ENCODE measurements at regions of chr17 and their contacts with region 1.

Region 1: GRCh38 chr17:55513885-55514591 is 2.8 kb upstream of the SMIM36 start:
- DNase-seq: no peak
- H3K4me3 ChIP-seq: no peak overlapping the region
- CTCF ChIP-seq: peak; percentile 63

Region 2: DNA sequence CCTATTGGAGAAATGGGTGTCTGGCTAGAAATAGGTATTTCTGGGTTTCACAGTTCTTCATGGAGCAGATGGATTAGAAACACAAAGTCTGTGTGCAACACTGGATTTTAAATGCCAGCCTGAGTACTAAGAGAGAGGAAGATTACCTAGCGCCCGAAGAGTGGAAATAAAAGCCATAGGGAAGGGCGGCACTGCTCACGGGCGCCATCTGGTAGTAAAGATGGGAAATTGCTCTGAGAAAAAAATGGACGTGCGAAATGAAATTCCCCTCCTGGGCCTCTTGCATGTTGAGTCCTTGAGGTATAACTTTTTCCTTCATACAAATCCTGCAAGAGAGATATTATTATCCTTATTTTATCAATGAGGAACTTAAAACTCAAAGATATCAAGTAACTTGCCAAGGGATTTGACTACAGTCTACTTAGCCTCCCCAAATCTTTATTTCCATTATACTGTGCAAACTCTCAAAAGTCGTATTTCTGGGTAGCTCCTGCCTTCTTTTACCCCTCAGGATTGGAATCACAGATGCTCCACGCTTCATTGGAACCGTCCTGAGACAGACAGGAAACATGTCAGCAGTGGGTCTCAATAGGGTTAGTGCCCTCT is 165.2 kb before region 1 on chr17:
- CTCF ChIA-PET with region 1: interaction called, 40 read pairs
- POLR2A ChIA-PET with region 1: no interaction called
- DNase-seq: no peak
- H3K4me3 ChIP-seq: no peak overlapping the region
- CTCF ChIP-seq: peak; percentile 79

Region 3: GRCh38 chr17:55356434-55357328 is 157.4 kb before region 1 on chr17:
- CTCF ChIA-PET with region 1: interaction called, 40 read pairs
- POLR2A ChIA-PET with region 1: no interaction called
- DNase-seq: no peak
- H3K4me3 ChIP-seq: no peak overlapping the region
- CTCF ChIP-seq: peak; percentile 59

Region 4: DNA sequence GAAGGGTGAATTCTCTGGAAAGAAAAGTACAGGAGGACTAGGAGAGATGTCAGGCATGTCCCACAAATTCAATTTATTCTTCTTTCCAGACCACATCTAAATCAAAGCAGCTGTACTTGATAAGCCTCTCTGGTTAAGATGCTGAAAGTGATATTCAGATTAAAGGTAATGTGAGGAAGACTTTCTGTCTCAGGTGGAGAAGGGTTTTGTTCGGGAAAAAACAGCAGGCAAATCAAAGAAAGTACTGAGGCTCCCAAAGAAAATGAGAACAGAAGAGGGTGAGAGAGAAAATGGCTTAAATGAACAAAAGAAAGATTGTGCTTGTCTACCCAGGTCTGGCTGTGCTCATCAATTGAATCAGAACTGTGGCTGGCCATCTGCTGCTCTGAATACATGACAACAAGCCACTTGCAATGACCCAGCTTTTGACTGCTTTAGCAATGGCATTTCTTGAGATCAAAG is 148.0 kb before region 1 on chr17:
- CTCF ChIA-PET with region 1: interaction called, 13 read pairs
- POLR2A ChIA-PET with region 1: no interaction called
- DNase-seq: no peak
- H3K4me3 ChIP-seq: no peak overlapping the region
- CTCF ChIP-seq: no peak

Region 5: DNA sequence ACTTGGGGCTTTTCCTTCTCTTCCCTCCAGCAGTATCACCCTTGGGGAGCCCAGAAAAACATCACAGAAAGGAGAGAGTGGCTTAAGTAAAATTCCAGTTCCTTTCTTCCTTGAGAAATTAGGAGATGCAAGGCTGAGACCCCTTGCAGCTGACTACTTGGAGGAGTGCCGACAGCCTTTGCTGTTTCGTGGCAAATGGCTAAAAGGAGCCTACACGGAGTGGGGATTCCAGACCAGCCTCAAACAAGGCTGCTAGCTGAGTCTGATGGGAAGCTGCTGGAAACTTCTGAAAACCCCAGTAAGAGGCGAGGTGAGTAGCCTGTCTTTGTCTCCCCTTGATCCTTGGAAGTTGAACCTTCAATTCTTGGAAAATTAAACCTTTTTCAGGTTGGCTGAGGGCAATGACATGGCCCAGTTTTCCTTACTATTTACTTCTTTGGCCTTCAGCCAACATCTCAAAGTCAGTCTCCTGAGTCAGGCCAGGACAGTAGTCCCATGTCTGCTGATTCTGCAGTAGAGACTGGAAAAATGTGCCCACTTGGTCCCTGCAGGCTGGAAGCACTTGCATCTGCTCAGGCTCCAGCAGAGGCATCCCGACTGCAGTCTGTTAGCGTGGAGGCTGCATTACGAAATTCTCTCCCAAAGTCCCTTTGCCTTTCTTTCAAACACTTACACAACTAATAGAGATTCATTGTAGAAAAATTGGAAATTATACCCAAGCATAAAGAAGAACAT is 26.2 kb before region 1 on chr17:
- CTCF ChIA-PET with region 1: no interaction called
- POLR2A ChIA-PET with region 1: no interaction called
- DNase-seq: no peak
- H3K4me3 ChIP-seq: no peak overlapping the region
- CTCF ChIP-seq: no peak